Left lung (tissue), 14 donors: ENCODE measurements at regions of chr15 and their contacts with region 1.

Region 1: GRCh38 chr15:51051776-51052175 is 42.9 kb downstream of the TNFAIP8L3 start:
- DNase-seq: peak in 3 of 4 donors; percentile 26 to 58 (median 43)
- ATAC-seq: peak; percentile 81
- H3K4me3 ChIP-seq: no peak overlapping the region
- H3K27ac ChIP-seq: no peak overlapping the region
- H3K4me1 ChIP-seq: peaks cover 5 to 6% of the 10 kb centered on the region in 2 donors
- H3K27me3 ChIP-seq: no peaks in the 10 kb centered on the region
- CTCF ChIP-seq: no peak

Region 2: GRCh38 chr15:50828610-50829219 is 223.1 kb before region 1 on chr15:
- intact Hi-C with region 1: no loop called
- DNase-seq: peak in 2 of 4 donors; percentile 28 to 36
- ATAC-seq: peak; percentile 79
- H3K4me3 ChIP-seq: no peak overlapping the region
- H3K27ac ChIP-seq: no peak overlapping the region
- H3K4me1 ChIP-seq: no peaks in the 10 kb centered on the region
- H3K27me3 ChIP-seq: no peaks in the 10 kb centered on the region
- CTCF ChIP-seq: no peak

Region 3: DNA sequence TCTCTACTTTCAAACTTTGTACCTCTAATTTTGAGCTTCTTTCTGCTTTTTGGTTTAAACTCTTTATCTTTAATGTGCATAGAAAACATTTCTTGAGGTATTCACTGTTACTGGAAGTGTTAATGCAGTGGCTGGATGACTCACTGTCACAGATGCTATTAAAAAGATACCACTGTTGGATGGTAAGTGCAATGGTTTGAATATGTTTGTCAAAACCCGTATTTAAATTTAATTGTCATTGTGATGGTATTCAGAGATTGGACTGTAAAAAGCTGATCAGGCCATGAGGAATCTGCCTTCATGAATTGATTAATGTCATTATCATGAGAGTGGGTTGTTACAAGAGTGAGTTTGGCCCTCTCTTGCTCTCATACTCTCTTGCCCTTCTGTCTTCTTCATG is 72.7 kb before region 1 on chr15:
- intact Hi-C with region 1: loop called in 1 of 2 experiments (anchors 10 kb)
- DNase-seq: no peak
- ATAC-seq: no peak
- H3K4me3 ChIP-seq: no peak overlapping the region
- H3K27ac ChIP-seq: no peak overlapping the region
- H3K4me1 ChIP-seq: peaks cover 3 to 6% of the 10 kb centered on the region in 2 donors
- H3K27me3 ChIP-seq: no peaks in the 10 kb centered on the region
- CTCF ChIP-seq: no peak